ENCODE measurements at regions of chr3 and their contacts with region 1.

Region 1: GRCh38 chr3:112334691-112335485 is 1.9 kb downstream of the CD200 start:
- DNase-seq: no peak
- H3K4me3 ChIP-seq: no peak overlapping the region
- H3K27ac ChIP-seq: peak overlapping the region in 1 of 2 donors; percentile 67
- H3K4me1 ChIP-seq: no peaks in the 10 kb centered on the region
- H3K27me3 ChIP-seq: no peaks in the 10 kb centered on the region
- CTCF ChIP-seq: no peak
- POLR2A ChIP-seq: no peak

Region 2: DNA sequence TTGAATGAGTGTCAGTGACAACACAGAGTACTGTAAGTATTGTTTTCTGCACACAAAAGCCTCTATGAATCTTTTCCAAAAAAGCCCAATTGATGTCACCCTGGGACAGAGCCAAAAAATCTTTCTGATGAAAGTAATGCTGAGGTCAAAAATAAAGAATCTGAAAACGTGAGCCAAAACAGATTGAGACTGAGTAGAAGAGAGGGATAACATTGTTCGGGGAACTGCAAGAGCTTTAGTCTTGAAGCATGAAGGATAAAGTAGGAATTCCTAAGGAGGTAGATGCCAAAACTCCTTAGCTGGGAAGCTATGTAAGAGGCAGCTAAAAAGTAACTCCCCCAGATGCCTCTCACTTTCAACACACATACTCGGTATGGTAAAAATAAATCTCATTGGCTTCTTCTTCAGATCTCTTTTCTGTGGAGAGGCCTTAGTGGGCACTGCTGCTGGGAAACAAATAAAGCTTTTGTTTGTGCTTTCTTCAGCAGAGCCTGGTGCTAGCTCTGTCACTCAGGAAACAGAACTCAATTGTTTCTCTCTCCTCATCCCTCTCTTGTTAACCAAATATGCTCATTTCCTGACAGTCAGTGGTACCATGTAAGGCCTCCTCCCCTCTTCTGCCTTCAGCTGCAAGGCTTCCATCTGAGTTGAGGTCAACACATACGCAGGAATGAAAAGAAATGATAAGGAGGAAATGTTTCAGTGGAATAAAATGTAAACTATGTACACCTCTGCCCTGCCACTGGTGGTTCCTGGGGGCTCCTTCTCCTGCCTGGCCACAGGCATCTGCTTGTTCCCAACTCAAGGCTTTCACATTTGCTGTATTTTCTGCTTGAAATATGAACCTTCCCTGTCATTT is 56.1 kb after region 1 on chr3:
- intact Hi-C with region 1: loop called (anchors 5 kb)
- DNase-seq: no peak
- H3K4me3 ChIP-seq: no peak overlapping the region
- H3K27ac ChIP-seq: peak overlapping the region; percentile 37 to 39
- H3K4me1 ChIP-seq: no peaks in the 10 kb centered on the region
- H3K27me3 ChIP-seq: no peaks in the 10 kb centered on the region
- CTCF ChIP-seq: no peak
- POLR2A ChIP-seq: no peak

Measured in prostate gland (tissue), 2 donors.